ENCODE measurements at regions of chr10 and their contacts with region 1.

Region 1: DNA sequence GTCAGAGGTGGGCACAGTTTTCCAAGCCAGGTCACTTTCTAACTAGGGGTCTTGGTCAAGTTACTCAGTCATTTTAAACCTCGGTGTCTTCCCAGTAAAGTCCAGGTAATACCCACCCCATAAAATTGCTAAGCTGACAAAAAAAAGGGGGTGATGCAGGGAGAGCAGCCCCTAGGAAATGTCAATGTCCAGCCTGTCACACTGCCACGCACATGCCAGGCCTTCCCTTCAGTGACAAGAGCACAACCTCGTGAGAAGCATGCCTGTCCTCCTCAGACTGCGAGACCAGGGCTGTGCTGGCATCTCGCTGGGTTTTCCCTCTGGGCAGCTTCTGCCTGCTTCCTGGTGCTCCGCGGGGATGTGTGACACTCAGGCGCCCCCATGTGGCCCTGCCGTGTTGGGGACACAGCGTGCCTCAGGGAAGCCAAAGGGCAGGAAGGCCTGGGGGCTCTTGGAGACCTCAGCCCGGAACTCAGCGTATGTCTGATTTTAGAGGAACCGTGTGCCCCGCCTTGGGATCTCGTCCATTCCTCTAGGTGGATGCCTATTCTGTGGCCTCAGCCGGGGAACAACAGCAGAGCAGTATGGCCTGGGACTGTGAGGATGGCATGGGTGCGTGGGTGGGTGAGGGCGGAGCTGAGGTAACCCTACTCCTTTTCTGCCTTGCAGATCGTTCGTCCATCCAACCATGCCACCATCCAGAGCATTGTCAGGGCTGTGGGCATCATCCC is 10.2 kb upstream of the GDF2 start:
- DNase-seq: peak; percentile 85
- H3K4me3 ChIP-seq: no peak overlapping the region
- H3K27ac ChIP-seq: peak overlapping the region in 1 of 4 donors; percentile 45
- H3K4me1 ChIP-seq: peaks cover 0 to 13% (median 11%) of the 10 kb centered on the region in 4 donors
- H3K27me3 ChIP-seq: no peaks in the 10 kb centered on the region
- CTCF ChIP-seq: peak; percentile 73 to 91 (median 86)
- EP300 ChIP-seq: no peak
- POLR2A ChIP-seq: no peak

Region 2: GRCh38 chr10:47024399-47025252 is 287.5 kb before region 1 on chr10:
- in situ Hi-C with region 1: loop called in 2 of 4 experiments (anchors 10 to 25 kb)
- intact Hi-C with region 1: no loop called
- DNase-seq: peak; percentile 66
- H3K4me3 ChIP-seq: no peak overlapping the region
- H3K27ac ChIP-seq: no peak overlapping the region
- H3K4me1 ChIP-seq: no peaks in the 10 kb centered on the region
- H3K27me3 ChIP-seq: no peaks in the 10 kb centered on the region
- CTCF ChIP-seq: peak; percentile 73 to 84 (median 79)
- EP300 ChIP-seq: no peak
- POLR2A ChIP-seq: no peak

Region 3: GRCh38 chr10:47031211-47031900 is 280.7 kb before region 1 on chr10:
- in situ Hi-C with region 1: loop called in 3 of 4 experiments (anchors 10 to 25 kb)
- intact Hi-C with region 1: no loop called
- DNase-seq: no peak
- H3K4me3 ChIP-seq: no peak overlapping the region
- H3K27ac ChIP-seq: no peak overlapping the region
- H3K4me1 ChIP-seq: no peaks in the 10 kb centered on the region
- H3K27me3 ChIP-seq: no peaks in the 10 kb centered on the region
- CTCF ChIP-seq: no peak
- EP300 ChIP-seq: no peak
- POLR2A ChIP-seq: no peak

Region 4: DNA sequence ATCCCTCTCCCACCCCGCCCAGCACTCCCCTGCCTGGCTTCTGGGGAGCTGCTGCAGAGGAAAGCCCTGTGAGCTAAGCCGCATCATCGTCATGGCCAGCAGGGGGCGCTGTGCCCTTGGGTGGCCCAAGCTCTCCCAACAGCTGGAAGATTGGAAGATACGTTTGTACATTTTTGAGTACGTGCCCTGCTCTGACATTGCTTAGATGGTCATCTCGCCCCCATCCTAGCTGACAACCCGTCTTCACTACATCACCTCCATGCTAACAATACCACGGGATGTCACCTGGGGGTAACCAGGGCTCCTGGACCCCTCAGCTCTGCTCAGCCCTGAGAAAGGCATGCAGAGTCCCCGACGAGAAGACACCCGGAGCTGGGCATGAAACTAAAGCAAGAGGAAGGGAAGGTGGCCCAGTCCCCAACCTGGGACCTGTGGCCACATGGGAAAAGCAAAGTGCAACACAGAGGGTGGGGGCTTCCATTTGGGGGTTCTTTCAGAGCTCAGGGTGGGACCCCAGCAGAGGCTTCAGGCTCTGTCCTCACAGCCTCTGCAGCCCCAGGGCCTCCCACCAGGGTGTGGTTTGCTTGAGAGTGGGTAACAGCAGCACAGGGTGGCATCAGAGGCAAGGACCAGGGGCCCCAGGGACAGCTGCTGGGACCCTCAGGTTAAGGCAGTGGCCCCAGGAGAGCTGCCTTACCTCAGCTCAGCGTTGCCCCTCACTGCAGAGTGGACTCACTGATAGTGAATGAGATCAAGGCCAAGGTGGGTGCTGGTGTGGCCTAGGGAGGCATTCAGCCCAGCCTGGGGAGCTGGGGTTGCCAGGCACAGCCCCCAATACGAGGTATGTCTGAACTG is 264.2 kb before region 1 on chr10:
- in situ Hi-C with region 1: loop called in 2 of 4 experiments (anchors 5 to 25 kb)
- intact Hi-C with region 1: loop called (anchors 2 kb)
- DNase-seq: peak; percentile 83
- H3K4me3 ChIP-seq: no peak overlapping the region
- H3K27ac ChIP-seq: no peak overlapping the region
- H3K4me1 ChIP-seq: no peaks in the 10 kb centered on the region
- H3K27me3 ChIP-seq: no peaks in the 10 kb centered on the region
- CTCF ChIP-seq: peak; percentile 71 to 91 (median 82)
- EP300 ChIP-seq: no peak
- POLR2A ChIP-seq: no peak

Region 5: GRCh38 chr10:47137311-47137851 is 174.7 kb before region 1 on chr10:
- in situ Hi-C with region 1: no loop called
- intact Hi-C with region 1: no loop called
- DNase-seq: no peak
- H3K4me3 ChIP-seq: no peak overlapping the region
- H3K27ac ChIP-seq: no peak overlapping the region
- H3K4me1 ChIP-seq: no peaks in the 10 kb centered on the region
- H3K27me3 ChIP-seq: no peaks in the 10 kb centered on the region
- CTCF ChIP-seq: no peak
- EP300 ChIP-seq: no peak
- POLR2A ChIP-seq: no peak

Region 6: GRCh38 chr10:47181052-47181849 is 130.8 kb before region 1 on chr10:
- in situ Hi-C with region 1: no loop called
- intact Hi-C with region 1: loop called (anchors 10 kb)
- DNase-seq: no peak
- H3K4me3 ChIP-seq: no peak overlapping the region
- H3K27ac ChIP-seq: no peak overlapping the region
- H3K4me1 ChIP-seq: no peaks in the 10 kb centered on the region
- H3K27me3 ChIP-seq: no peaks in the 10 kb centered on the region
- CTCF ChIP-seq: no peak
- EP300 ChIP-seq: no peak
- POLR2A ChIP-seq: no peak

Region 7: GRCh38 chr10:47396311-47396729 is 84.2 kb after region 1 on chr10:
- in situ Hi-C with region 1: no loop called
- intact Hi-C with region 1: no loop called
- DNase-seq: no peak
- H3K4me3 ChIP-seq: no peak overlapping the region
- H3K27ac ChIP-seq: no peak overlapping the region
- H3K4me1 ChIP-seq: no peaks in the 10 kb centered on the region
- H3K27me3 ChIP-seq: peaks cover 13% of the 10 kb centered on the region
- CTCF ChIP-seq: no peak
- EP300 ChIP-seq: no peak
- POLR2A ChIP-seq: no peak